ENCODE measurements at regions of chr16 and their contacts with region 1.

Region 1: GRCh38 chr16:81140930-81141780 is 45.0 kb upstream of the GCSH start:
- DNase-seq: peak; percentile 82
- ATAC-seq: peak; percentile 84
- H3K4me3 ChIP-seq: peak overlapping the region; percentile 40 to 72 (median 50)
- H3K27ac ChIP-seq: peak overlapping the region; percentile 60
- H3K4me1 ChIP-seq: peaks cover 57% of the 10 kb centered on the region
- H3K27me3 ChIP-seq: 0 out of 5 replicates have a peak, but pooled peaks cover 0 to 8% of the 10 kb centered on the region in 2 experiments
- CTCF ChIP-seq: peak; percentile 84
- EP300 ChIP-seq: peak in 1 of 2 experiments; percentile 47; a peak in 1 of 4 replicates
- POLR2A ChIP-seq: peak in 1 of 2 experiments; percentile 57; a peak in 2 of 4 replicates
- RAD21 ChIP-seq: peak; percentile 44; the same call in 1 of the 2 replicates

Region 2: DNA sequence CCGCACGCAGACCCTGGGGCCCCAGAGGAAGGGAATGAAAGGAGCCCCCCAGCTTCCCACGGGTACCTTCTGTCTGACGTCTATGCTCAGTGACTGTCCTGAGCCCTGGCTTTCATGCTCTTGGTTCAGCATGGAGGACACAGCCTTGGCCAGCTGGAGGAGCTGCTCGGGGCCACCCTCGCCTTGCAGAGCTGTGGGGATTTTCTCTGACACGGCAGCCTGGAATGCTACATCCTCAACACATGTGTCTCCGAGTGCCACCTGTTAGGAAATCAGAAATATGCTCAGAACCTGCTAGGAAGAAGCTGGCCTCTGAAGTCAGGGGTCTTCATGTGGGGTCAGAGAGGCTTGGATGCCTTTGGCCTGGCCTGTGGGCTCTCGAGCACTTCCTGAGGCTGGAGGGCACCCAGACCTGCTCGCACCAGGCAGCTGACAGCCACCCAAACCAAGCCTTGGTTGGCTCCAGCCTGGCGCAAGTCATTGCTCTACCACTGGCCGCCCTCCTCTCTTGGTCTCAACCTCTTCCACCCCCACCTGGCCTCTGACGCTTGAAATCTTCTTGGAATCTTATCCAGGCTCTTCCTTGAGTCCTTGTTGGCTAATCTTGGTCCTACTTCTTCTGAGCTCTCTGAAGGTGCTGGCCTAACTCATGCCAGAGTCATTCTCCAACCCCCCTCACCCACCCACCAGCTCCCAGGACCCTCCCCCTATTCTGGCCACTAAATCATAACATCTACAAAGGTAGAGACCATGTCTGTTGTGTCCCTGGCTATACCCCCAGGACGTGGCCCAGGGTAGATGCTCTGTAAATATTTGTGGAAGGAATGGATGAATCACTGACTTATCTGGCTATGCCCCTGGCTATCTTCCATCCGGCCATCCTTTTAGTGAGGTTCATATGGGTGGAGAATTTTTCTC is 33.8 kb after region 1 on chr16:
- CTCF ChIA-PET with region 1: no interaction called
- POLR2A ChIA-PET with region 1: interaction called, 3 read pairs
- in situ Hi-C with region 1: no loop called
- intact Hi-C with region 1: loop called (anchors 5 kb)
- DNase-seq: peak; percentile 85
- ATAC-seq: peak; percentile 87
- H3K4me3 ChIP-seq: peak overlapping the region in 1 of 3 experiments; percentile 47; a peak in 1 of 6 replicates
- H3K27ac ChIP-seq: no peak overlapping the region
- H3K4me1 ChIP-seq: peaks cover 39% of the 10 kb centered on the region
- H3K27me3 ChIP-seq: peaks cover 0 to 7% of the 10 kb centered on the region in 2 experiments; a peak in 1 of 5 replicates
- CTCF ChIP-seq: no peak
- EP300 ChIP-seq: peak in 1 of 2 experiments; percentile 52; a peak in 1 of 4 replicates
- POLR2A ChIP-seq: no peak
- RAD21 ChIP-seq: no peak